ENCODE measurements at regions of chr12 and their contacts with region 1.

Region 1: GRCh38 chr12:75390899-75391538 is at the start of gene GLIPR1L2:
- DNase-seq: peak; percentile 86
- ATAC-seq: peak; percentile 98
- H3K4me3 ChIP-seq: peak within 1 kb of the TSS; percentile 62
- H3K27ac ChIP-seq: peak within 1 kb of the TSS; percentile 91
- H3K4me1 ChIP-seq: peaks cover 7% of the 10 kb centered on the region
- H3K27me3 ChIP-seq: no peaks in the 10 kb centered on the region
- CTCF ChIP-seq: peak; percentile 79 to 91 (median 90)
- EP300 ChIP-seq: no peak
- POLR2A ChIP-seq: peak; percentile 76
- RAD21 ChIP-seq: peak; percentile 57
- polyA plus RNA-seq, gene GLIPR1L2: 0.04 TPM in 1 of 2 experiments, not detected in the other

Region 2: GRCh38 chr12:75334384-75335030 is 56.5 kb before region 1 on chr12 and contains the start of gene GLIPR1L1:
- CTCF ChIA-PET with region 1: interaction called, 45 read pairs
- POLR2A ChIA-PET with region 1: no interaction called
- RAD21 ChIA-PET with region 1: interaction called, 13 read pairs
- SMC1A ChIA-PET with region 1: interaction called, 18 read pairs
- in situ Hi-C with region 1: no loop called
- intact Hi-C with region 1: loop called (anchors 1 kb)
- DNase-seq: peak; percentile 44
- ATAC-seq: peak; percentile 83
- H3K4me3 ChIP-seq: peak within 1 kb of the TSS; percentile 57; the same call in 1 of the 2 replicates
- H3K27ac ChIP-seq: no peak within 1 kb of the TSS
- H3K4me1 ChIP-seq: peaks cover 4% of the 10 kb centered on the region
- H3K27me3 ChIP-seq: no peaks in the 10 kb centered on the region
- CTCF ChIP-seq: peak; percentile 83 to 90 (median 89)
- EP300 ChIP-seq: no peak
- POLR2A ChIP-seq: no peak
- RAD21 ChIP-seq: peak; percentile 87
- polyA plus RNA-seq, gene GLIPR1L1: 0.10 to 0.13 TPM

Region 3: DNA sequence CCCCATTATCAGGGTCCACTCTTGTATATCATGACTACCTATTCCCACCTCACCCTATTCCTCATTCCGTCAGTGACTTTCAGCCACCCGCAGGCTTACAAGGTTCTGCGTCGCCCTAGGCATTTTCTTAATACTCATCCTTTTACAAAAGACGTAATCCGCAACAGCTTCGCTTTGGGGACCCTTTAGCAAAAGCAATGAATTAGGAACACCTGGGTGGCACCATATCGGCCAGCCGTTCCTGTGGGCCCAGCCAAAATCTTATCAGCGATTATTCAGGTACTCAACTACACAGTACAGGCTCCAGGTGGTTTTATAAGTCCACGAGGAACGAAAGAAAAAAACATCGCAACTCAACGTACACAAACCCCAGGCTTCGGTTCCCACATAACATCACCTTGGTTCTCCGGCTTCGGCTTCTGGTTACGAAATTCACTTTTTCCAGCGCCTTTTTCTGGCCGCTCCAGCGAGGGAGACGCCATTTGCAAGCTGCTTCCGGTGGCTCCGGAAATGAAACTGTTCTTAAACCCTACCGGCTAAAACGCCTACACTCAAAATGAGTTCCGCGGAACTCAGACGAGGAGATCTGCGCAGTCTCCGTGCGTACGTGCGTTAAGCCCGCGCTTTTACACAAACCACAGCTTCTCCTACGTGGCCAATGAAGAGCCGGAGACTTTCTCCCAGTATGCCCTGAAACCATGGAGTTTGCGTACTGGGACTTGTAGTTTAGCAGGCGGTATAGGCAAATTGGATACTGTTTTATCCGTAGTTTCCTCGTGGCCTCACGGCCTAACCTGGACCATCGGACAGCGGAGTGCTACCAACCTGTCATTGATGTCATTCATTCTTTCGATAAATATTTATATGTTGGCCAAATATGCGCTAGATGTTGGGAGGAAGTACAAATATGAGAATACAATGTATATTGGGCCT is 120.4 kb after region 1 on chr12 and contains the start of gene KRR1:
- CTCF ChIA-PET with region 1: interaction called, 14 read pairs
- POLR2A ChIA-PET with region 1: no interaction called
- RAD21 ChIA-PET with region 1: interaction called, 12 read pairs
- SMC1A ChIA-PET with region 1: interaction called, 7 read pairs
- in situ Hi-C with region 1: no loop called
- intact Hi-C with region 1: loop called (anchors 1 kb)
- DNase-seq: peak; percentile 89
- ATAC-seq: peak; percentile 93
- H3K4me3 ChIP-seq: peak within 1 kb of the TSS; percentile 76
- H3K27ac ChIP-seq: peak within 1 kb of the TSS; percentile 85
- H3K4me1 ChIP-seq: no peaks in the 10 kb centered on the region; the same call in 1 of the 2 replicates
- H3K27me3 ChIP-seq: no peaks in the 10 kb centered on the region
- CTCF ChIP-seq: no peak
- EP300 ChIP-seq: no peak
- POLR2A ChIP-seq: peak; percentile 77
- RAD21 ChIP-seq: no peak
- polyA plus RNA-seq, gene KRR1: 74.4 to 81.0 TPM